ENCODE measurements at regions of chr14 and their contacts with region 1.

Region 1: GRCh38 chr14:63276492-63277342 is 42.0 kb downstream of the GPHB5 start:
- DNase-seq: no peak
- ATAC-seq: peak; percentile 13

Region 2: DNA sequence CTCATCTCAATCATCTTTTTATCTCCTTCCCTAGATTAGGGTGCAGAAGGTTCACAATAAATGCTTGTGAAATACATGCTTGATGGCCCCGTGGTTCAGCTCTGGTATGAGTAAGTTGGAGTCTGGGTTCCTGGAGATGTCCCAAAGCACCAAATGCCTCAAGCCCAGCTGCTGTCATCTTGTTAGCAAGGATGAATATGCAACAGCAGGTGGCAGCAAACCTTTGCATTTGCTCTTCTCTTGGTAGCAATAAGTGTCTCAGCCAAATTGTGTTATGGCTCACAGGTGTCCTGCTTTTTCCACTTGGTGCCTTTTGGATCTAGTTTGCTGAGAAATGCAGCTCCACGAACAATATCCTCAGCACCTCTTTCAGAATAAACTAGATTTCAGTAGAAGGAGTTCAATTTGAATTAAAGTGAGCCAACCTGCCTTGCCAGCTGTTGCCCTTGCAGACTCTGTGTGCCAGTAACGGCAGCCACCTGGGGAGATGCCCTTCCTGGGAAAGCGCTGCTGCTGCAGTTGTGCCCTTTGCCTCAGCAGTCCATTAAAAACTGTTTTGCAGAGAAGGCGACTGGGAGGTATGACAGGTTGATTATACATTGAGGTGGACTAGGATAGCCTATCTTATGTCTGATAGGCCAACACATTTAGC is 1097.2 kb before region 1 on chr14:
- intact Hi-C with region 1: loop called (anchors 10 kb)
- DNase-seq: no peak
- ATAC-seq: no peak

Region 3: DNA sequence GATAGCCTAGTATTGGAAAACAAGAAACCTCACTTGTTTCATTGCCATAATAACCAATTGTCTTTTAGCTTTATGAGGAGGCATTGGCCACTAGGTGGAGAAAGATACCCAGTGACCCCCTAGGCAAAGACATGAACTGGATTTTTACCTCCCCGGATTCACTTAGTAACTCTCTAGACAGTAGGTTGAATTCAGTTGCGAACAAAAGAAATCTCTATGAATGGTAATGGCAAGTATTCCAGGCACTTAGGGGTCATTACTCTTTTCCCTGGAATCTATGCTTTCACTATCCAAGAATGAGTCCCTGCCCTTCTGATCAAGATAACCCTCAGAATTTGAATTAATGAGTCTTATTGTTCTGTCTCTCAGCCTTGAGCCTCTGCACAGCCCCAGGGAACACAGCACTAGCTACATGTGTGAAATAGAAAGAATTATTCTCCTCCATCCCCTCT is 101.9 kb before region 1 on chr14:
- intact Hi-C with region 1: loop called (anchors 1 kb)
- DNase-seq: no peak
- ATAC-seq: peak; percentile 59

Measured in Right ventricle myocardium inferior (tissue), 1 donor.